A673 (cell line): ENCODE measurements at regions of chr6 and their contacts with region 1.

Region 1: GRCh38 chr6:168274037-168274952 is 45.3 kb downstream of the DACT2 start:
- DNase-seq: peak; percentile 72
- H3K4me3 ChIP-seq: no peak overlapping the region
- H3K27ac ChIP-seq: no peak overlapping the region
- H3K4me1 ChIP-seq: peaks cover 26% of the 10 kb centered on the region
- H3K27me3 ChIP-seq: no peaks in the 10 kb centered on the region
- CTCF ChIP-seq: no peak

Region 2: DNA sequence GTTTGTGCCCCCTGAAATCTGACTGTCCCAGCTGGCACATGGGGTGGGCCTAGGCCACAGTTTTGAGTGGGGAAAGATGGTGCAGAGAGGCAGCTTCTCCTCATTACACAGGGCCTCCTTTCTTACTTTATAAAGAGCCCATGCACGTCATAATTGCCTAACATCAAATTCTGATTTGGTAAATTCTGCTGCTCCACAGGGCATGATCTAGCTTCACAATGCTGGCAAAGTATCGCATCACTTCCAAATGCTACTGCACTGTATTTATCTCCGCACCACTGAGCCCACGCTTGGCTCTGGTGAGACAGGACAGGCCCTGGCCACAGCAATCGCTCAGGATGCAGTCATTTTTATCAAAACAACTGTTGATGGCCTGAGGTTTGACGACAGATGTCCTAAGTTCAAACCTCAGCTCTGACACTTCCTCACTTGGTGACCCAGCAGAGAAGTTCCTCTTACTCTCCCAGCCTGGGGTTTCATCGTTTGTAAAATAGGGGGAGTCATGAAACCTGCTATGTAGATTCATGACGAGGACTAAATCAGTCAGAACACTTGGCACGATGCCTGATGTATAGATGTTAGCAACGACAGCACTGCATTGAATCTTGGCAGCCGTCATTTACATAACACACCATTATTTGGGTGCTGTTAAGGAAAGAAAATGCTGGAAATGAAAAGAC is 761.5 kb before region 1 on chr6:
- CTCF ChIA-PET with region 1: interaction called, 18 read pairs
- POLR2A ChIA-PET with region 1: no interaction called
- intact Hi-C with region 1: no loop called
- DNase-seq: peak; percentile 29
- H3K4me3 ChIP-seq: no peak overlapping the region
- H3K27ac ChIP-seq: peak overlapping the region; percentile 52
- H3K4me1 ChIP-seq: peaks cover 20% of the 10 kb centered on the region
- H3K27me3 ChIP-seq: no peaks in the 10 kb centered on the region
- CTCF ChIP-seq: no peak

Region 3: DNA sequence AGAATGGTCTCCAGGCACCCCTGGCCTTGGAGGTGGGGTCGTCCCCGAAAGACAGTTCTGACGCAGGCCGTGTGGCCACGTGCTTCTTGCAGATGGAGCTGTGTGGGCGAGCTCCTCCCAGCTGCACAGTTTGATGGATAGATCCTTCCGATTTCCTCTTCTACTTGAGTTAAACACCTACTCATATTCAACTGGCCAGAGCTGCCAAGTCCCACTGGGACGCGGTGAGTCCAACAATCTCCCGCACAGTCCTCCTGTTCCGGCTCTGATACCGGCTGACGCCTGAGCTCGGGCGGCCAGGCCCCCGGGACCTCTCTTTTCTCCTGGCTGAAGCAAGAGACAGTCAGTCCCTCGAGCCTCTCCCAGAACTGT is 103.2 kb after region 1 on chr6:
- CTCF ChIA-PET with region 1: no interaction called
- POLR2A ChIA-PET with region 1: no interaction called
- intact Hi-C with region 1: no loop called
- DNase-seq: peak; percentile 25
- H3K4me3 ChIP-seq: no peak overlapping the region
- H3K27ac ChIP-seq: no peak overlapping the region
- H3K4me1 ChIP-seq: peaks cover 9% of the 10 kb centered on the region
- H3K27me3 ChIP-seq: no peaks in the 10 kb centered on the region
- CTCF ChIP-seq: no peak

Region 4: DNA sequence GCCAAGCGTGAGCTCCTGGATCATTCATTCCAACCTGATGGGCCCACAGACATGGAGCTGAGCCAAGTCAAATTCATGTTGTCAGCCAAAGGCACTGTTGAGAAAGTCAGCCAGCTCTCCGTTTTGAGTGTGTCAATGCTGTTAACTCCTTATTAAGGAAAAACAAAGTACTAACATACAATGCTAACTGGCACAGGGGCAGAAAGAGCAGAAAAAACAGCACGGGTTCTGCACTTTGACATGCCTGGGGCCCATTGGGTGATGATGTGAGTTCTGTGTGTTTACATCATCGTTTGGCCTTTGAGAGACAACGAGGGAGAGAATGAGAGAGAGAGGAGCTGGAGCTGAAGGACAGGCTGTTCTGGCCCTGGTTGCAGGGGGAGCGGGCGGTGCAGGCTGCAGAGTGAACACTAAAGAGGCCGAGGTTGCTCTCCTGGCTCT is 252.6 kb after region 1 on chr6:
- CTCF ChIA-PET with region 1: no interaction called
- POLR2A ChIA-PET with region 1: no interaction called
- intact Hi-C with region 1: no loop called
- DNase-seq: no peak
- H3K4me3 ChIP-seq: no peak overlapping the region
- H3K27ac ChIP-seq: no peak overlapping the region
- H3K4me1 ChIP-seq: no peaks in the 10 kb centered on the region
- H3K27me3 ChIP-seq: no peaks in the 10 kb centered on the region
- CTCF ChIP-seq: no peak